CD8-positive, alpha-beta memory T cell (primary cell): ENCODE measurements at regions of chr17 and their contacts with region 1.

Region 1: DNA sequence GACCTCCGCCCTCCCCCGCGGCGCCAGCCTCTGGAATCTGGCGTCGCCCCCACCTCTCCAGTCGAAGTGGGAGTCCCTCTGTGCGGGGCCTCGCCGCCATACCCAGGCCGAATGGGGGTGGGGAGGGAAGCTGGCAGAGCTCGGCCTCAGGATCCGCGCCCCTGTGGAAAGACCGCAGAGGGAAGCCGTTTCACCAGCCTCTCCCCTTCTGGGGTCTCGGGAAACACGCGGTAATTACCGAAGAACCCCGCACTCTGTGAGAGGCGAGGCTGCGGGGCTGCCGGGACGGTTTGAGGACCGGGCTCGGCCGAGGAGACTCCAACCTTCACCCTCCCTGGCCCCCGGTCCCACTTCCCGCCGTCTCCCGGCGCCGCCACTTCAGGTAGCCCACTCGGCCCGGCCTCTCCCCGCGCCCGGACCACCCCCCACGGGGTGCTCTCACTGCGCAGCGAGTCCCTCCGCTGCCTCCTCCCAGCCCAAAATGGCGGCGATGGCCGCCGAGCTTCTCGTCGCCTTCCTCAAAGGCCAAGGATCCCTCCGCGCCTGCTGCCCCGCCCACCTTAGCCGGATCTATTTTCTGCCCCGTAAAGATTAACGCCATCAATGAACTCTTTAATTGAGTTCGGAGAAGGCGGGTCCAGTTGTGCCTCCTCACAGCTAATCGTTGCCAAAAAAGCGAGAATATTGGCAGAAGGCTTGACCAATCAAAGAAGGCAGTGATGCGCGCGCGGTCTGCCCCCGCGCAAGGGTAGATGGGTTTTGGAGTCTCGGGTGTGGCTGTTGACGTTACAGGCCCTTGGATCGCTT is 453 bp upstream of the HEXIM2 start:
- DNase-seq: peak; percentile 91 to 99 (median 99)
- H3K4me3 ChIP-seq: peak overlapping the region; percentile 67
- H3K4me3 Mint-ChIP-seq: peak overlapping the region; percentile 92 to 99 (median 94)
- H3K27ac ChIP-seq: peak overlapping the region; percentile 96
- H3K27ac Mint-ChIP-seq: peak overlapping the region; percentile 89 to 99 (median 97)
- H3K4me1 ChIP-seq: peaks cover 27% of the 10 kb centered on the region
- H3K4me1 Mint-ChIP-seq: peaks cover 31 to 51% (median 51%) of the 10 kb centered on the region in 3 donors
- H3K27me3 ChIP-seq: no peaks in the 10 kb centered on the region
- H3K27me3 Mint-ChIP-seq: peaks cover 0 to 2% of the 10 kb centered on the region in 2 donors

Region 2: GRCh38 chr17:45110668-45111611 is 50.3 kb before region 1 on chr17:
- CTCF ChIA-PET with region 1: no interaction called
- POLR2A ChIA-PET with region 1: no interaction called
- DNase-seq: no peak
- H3K4me3 ChIP-seq: no peak overlapping the region
- H3K4me3 Mint-ChIP-seq: no peak overlapping the region
- H3K27ac ChIP-seq: no peak overlapping the region
- H3K27ac Mint-ChIP-seq: peak overlapping the region in 1 of 8 donors; percentile 77
- H3K4me1 ChIP-seq: no peaks in the 10 kb centered on the region
- H3K4me1 Mint-ChIP-seq: no peaks in the 10 kb centered on the region
- H3K27me3 ChIP-seq: no peaks in the 10 kb centered on the region
- H3K27me3 Mint-ChIP-seq: no peaks in the 10 kb centered on the region

Region 3: DNA sequence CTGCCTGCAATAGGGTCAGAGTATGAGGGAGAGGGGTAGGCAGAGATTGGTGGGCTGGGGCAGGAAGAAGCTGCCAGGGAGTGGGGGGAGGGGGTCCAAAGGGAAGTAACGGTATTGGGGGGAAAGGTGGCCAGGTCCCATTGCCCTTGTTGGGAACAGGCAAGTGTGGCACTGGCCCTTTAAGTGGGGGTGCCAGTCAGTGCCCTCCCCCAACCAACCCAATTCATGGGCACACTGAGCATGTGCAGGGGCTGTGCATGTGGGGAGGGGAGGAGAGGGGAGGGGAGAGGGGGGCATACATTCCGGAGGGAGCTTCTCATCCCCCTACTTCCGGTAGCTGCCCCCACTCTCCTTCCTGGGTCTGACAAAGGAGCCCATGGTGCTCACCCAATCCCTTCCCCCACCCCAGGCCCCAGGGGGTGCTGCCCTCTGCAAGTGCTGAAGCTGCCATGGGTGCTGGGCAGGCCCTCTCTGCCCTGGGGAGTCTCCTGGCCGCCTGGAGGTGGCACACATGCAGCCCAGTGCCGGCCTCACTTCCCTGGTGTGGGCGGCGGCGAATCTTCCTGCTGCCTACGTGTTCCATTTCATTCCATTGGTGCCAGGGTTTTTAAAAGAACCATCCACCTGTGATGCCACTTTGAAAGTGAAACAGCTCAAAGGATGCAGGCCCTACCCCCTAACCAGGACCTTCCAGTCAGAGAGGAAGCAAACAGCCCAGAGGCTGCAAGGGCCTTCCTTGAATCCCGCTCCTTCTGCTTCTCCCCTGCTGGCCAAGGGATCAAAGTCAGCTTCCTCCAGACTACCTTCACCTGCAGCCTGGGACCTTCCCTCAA is 11.4 kb after region 1 on chr17:
- CTCF ChIA-PET with region 1: interaction called, 3 read pairs
- POLR2A ChIA-PET with region 1: interaction called, 14 read pairs
- DNase-seq: peak; percentile 10 to 68 (median 33)
- H3K4me3 ChIP-seq: peak overlapping the region; percentile 62
- H3K4me3 Mint-ChIP-seq: peak overlapping the region; percentile 51 to 81 (median 77)
- H3K27ac ChIP-seq: peak overlapping the region; percentile 0
- H3K27ac Mint-ChIP-seq: peak overlapping the region; percentile 60 to 98 (median 88)
- H3K4me1 ChIP-seq: peaks cover 23% of the 10 kb centered on the region
- H3K4me1 Mint-ChIP-seq: peaks cover 7 to 21% (median 9%) of the 10 kb centered on the region in 3 donors
- H3K27me3 ChIP-seq: no peaks in the 10 kb centered on the region
- H3K27me3 Mint-ChIP-seq: no peaks in the 10 kb centered on the region

Region 4: GRCh38 chr17:45197555-45198334 is 36.5 kb after region 1 on chr17:
- CTCF ChIA-PET with region 1: interaction called, 94 read pairs
- POLR2A ChIA-PET with region 1: interaction called, 11 read pairs
- DNase-seq: peak; percentile 74 to 86 (median 83)
- H3K4me3 ChIP-seq: no peak overlapping the region
- H3K4me3 Mint-ChIP-seq: no peak overlapping the region
- H3K27ac ChIP-seq: no peak overlapping the region
- H3K27ac Mint-ChIP-seq: no peak overlapping the region
- H3K4me1 ChIP-seq: no peaks in the 10 kb centered on the region
- H3K4me1 Mint-ChIP-seq: peaks cover 1 to 5% (median 4%) of the 10 kb centered on the region in 3 donors
- H3K27me3 ChIP-seq: no peaks in the 10 kb centered on the region
- H3K27me3 Mint-ChIP-seq: no peaks in the 10 kb centered on the region

Region 5: GRCh38 chr17:45228763-45229539 is 67.7 kb after region 1 on chr17:
- CTCF ChIA-PET with region 1: interaction called, 3 read pairs
- POLR2A ChIA-PET with region 1: interaction called, 13 read pairs
- DNase-seq: peak; percentile 78 to 91 (median 85)
- H3K4me3 ChIP-seq: peak overlapping the region; percentile 95
- H3K4me3 Mint-ChIP-seq: peak overlapping the region; percentile 96 to 100 (median 99)
- H3K27ac ChIP-seq: peak overlapping the region; percentile 98
- H3K27ac Mint-ChIP-seq: peak overlapping the region; percentile 97 to 100 (median 100)
- H3K4me1 ChIP-seq: peaks cover 75% of the 10 kb centered on the region
- H3K4me1 Mint-ChIP-seq: peaks cover 80 to 90% (median 83%) of the 10 kb centered on the region in 3 donors
- H3K27me3 ChIP-seq: no peaks in the 10 kb centered on the region
- H3K27me3 Mint-ChIP-seq: peaks cover 0 to 3% of the 10 kb centered on the region in 2 donors